Transverse colon (tissue), 4 donors: ENCODE measurements at regions of chr12 and their contacts with region 1.

Region 1: DNA sequence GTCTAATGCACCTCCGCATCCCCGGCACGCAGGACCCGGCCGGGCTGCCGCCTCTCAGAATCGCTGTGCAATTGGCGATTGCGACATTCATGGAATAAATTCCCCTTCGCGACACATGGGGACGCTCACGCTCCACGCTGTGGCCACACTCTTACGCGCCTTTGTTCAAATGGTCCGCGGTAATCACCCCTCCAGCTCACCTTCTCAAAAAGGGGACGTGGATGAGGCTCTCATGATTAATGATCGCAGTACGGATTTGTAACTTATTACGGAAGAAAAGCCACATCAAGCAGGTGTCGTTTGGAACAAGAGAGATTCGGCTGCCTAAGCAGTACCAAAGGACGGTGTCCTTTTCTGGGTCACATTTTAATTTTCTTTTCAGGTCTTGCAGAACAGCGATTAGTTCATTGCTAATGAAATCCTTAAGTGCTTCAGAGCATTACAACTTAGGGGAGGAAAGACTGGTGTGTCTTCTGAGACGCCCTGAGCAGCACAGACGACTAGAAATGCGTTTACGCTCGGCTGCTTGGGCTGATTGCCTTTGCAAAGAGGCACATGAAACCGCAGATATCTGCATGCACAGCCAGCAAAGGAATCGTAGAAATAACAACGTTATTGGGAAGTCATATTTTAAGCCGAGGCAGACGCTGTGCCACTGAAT is 37.3 kb upstream of the ADGRD1 start:
- DNase-seq: peak; percentile 30
- H3K4me3 ChIP-seq: peak overlapping the region in 1 of 4 donors; percentile 23
- H3K27ac ChIP-seq: no peak overlapping the region
- H3K4me1 ChIP-seq: peaks cover 0 to 7% (median 0%) of the 10 kb centered on the region in 4 donors
- H3K27me3 ChIP-seq: peaks cover 22% of the 10 kb centered on the region
- CTCF ChIP-seq: peak; percentile 75 to 86 (median 79)
- EP300 ChIP-seq: no peak
- POLR2A ChIP-seq: no peak

Region 2: DNA sequence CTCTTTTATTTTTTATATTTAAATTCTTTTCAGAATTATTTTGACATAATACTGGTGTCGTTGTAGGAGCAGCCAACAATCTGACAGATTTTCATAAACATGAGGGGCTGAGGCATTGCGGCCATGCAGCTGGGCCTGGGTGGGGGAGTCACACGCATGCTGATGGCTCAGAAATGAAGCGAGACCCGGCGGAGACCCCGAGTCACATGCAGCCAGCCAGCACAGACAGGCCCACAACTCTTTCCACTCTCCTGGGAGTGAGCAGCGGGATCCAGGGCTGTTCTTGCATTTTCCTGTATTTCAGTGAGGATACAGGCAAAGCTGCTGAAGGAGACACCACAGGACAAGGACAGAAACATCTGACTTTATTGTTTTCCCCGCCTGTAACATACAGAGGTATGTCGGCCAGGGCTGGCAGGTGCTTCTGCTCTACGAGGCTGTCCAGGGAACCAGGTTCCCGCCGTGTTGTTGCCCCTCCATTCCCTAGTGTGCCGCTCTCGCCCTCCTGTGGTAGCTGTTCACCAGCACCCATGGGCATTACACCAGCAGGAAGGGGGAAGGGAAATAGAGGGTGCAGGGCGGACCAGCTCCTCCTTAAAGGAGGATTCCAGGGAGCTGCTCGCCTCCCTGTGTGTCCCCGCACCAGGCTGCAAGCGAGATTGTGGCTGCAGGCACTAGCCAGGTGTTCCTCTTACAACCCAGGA is 723.6 kb before region 1 on chr12:
- in situ Hi-C with region 1: no loop called
- intact Hi-C with region 1: no loop called
- DNase-seq: no peak
- H3K4me3 ChIP-seq: no peak overlapping the region
- H3K27ac ChIP-seq: no peak overlapping the region
- H3K4me1 ChIP-seq: no peaks in the 10 kb centered on the region
- H3K27me3 ChIP-seq: no peaks in the 10 kb centered on the region
- CTCF ChIP-seq: no peak
- EP300 ChIP-seq: no peak
- POLR2A ChIP-seq: no peak

Region 3: DNA sequence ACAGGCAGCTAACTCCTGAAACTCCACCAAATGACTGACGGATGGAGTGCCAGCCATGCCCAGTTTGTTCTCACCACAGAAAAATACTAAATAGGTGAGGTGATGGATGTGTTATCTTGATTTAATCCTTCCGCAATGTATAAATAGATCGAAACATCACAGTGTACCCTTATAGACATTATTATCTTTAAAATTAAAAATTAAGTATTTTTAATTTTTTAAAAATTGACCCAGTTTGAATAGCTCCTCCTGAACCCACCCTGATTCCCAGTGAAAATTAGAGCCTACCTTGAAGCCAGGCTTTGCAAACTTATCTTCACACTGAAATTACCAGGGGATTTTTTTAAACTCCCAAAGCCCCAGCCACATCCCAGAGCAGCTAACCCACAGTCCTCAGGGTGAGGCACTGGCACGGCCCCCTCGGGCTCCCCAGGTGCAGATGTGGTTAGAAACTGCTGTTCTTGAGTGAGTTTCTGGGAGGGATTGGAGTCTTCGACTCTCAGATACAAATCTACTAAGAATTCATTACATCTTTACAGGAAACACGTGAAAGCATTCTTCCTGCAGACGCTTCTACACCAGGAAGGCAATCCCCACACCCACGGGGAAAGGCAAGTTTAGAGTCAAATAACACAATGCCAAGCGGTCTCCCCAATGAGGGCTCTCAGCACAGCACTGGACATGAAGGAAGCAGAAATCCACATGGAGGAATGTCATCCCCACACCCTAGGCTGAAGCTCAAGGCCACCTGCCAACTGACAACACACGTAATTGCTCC is 326.7 kb before region 1 on chr12:
- in situ Hi-C with region 1: no loop called
- intact Hi-C with region 1: no loop called
- DNase-seq: no peak
- H3K4me3 ChIP-seq: no peak overlapping the region
- H3K27ac ChIP-seq: no peak overlapping the region
- H3K4me1 ChIP-seq: no peaks in the 10 kb centered on the region
- H3K27me3 ChIP-seq: no peaks in the 10 kb centered on the region
- CTCF ChIP-seq: no peak
- EP300 ChIP-seq: no peak
- POLR2A ChIP-seq: no peak

Region 4: DNA sequence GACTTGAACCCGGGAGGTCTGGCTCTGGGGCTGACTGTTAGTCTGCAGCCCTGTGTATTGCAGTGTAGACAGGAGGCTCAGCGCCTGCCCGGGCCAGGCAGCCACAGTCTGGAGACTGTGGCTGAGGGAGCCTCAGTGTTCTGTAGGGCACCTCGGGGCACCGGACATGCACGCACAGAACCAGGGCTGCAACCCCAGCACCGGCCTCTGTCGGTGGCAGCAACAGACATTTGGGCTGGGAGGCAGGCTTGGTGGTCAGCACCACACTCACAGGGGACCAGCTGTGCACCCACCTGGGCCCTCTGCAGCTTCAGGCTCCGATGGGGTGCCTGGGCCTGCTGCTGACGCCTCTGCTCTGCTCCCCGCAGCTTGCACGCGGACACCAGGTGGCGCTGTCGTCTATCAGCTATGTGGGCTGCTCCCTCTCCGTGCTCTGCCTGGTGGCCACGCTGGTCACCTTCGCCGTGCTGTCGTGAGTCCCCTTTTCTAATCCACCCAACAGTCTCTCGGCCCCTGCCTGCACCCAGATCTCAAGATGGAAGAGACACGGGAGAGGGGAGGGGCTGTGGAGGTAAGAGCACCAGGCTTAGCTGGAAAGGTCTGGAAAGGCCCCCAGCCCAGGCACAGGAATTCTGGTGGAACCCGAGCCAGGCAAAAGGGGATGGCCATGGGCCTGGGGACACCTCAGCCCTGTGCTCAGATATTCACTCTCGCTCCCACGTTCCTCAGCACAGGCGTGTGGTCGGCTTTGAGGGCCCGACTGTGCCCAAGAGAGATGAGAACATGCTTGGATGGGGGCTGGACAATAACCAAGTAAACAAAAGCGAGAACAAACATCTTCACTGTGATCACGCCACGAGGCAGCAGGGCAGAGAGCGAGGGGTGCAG is 188.3 kb after region 1 on chr12:
- in situ Hi-C with region 1: loop called in 2 of 4 experiments (anchors 25 kb)
- intact Hi-C with region 1: no loop called
- DNase-seq: peak; percentile 87
- H3K4me3 ChIP-seq: no peak overlapping the region
- H3K27ac ChIP-seq: no peak overlapping the region
- H3K4me1 ChIP-seq: peaks cover 0 to 4% (median 0%) of the 10 kb centered on the region in 4 donors
- H3K27me3 ChIP-seq: no peaks in the 10 kb centered on the region
- CTCF ChIP-seq: peak; percentile 87 to 93 (median 87)
- EP300 ChIP-seq: no peak
- POLR2A ChIP-seq: no peak

Region 5: GRCh38 chr12:131132118-131132892 is 215.9 kb after region 1 on chr12:
- in situ Hi-C with region 1: loop called in 1 of 4 experiments (anchors 25 kb)
- intact Hi-C with region 1: loop called (anchors 10 kb)
- DNase-seq: peak; percentile 67
- H3K4me3 ChIP-seq: no peak overlapping the region
- H3K27ac ChIP-seq: no peak overlapping the region
- H3K4me1 ChIP-seq: peaks cover 5 to 8% (median 6%) of the 10 kb centered on the region in 4 donors
- H3K27me3 ChIP-seq: no peaks in the 10 kb centered on the region
- CTCF ChIP-seq: peak; percentile 69 to 75 (median 74)
- EP300 ChIP-seq: no peak
- POLR2A ChIP-seq: no peak